B cell (primary cell): ENCODE measurements at regions of chr12 and their contacts with region 1.

Region 1: GRCh38 chr12:92196368-92196767 is 50.7 kb upstream of the BTG1 start:
- DNase-seq: no peak
- ATAC-seq: no peak
- H3K4me3 ChIP-seq: no peak overlapping the region
- H3K4me3 Mint-ChIP-seq: no peak overlapping the region
- H3K27ac ChIP-seq: no peak overlapping the region
- H3K27ac Mint-ChIP-seq: no peak overlapping the region
- H3K4me1 ChIP-seq: peaks cover 10 to 16% of the 10 kb centered on the region in 2 donors
- H3K4me1 Mint-ChIP-seq: peaks cover 24% of the 10 kb centered on the region
- H3K27me3 ChIP-seq: no peaks in the 10 kb centered on the region
- H3K27me3 Mint-ChIP-seq: no peaks in the 10 kb centered on the region
- CTCF ChIP-seq: no peak

Region 2: GRCh38 chr12:92178340-92178739 is 18.0 kb before region 1 on chr12:
- CTCF ChIA-PET with region 1: no interaction called
- POLR2A ChIA-PET with region 1: no interaction called
- intact Hi-C with region 1: no loop called
- DNase-seq: no peak
- ATAC-seq: no peak
- H3K4me3 ChIP-seq: no peak overlapping the region
- H3K4me3 Mint-ChIP-seq: no peak overlapping the region
- H3K27ac ChIP-seq: no peak overlapping the region
- H3K27ac Mint-ChIP-seq: peak overlapping the region; percentile 47
- H3K4me1 ChIP-seq: peaks cover 3 to 9% of the 10 kb centered on the region in 2 donors
- H3K4me1 Mint-ChIP-seq: peaks cover 28% of the 10 kb centered on the region
- H3K27me3 ChIP-seq: no peaks in the 10 kb centered on the region
- H3K27me3 Mint-ChIP-seq: no peaks in the 10 kb centered on the region
- CTCF ChIP-seq: no peak

Region 3: DNA sequence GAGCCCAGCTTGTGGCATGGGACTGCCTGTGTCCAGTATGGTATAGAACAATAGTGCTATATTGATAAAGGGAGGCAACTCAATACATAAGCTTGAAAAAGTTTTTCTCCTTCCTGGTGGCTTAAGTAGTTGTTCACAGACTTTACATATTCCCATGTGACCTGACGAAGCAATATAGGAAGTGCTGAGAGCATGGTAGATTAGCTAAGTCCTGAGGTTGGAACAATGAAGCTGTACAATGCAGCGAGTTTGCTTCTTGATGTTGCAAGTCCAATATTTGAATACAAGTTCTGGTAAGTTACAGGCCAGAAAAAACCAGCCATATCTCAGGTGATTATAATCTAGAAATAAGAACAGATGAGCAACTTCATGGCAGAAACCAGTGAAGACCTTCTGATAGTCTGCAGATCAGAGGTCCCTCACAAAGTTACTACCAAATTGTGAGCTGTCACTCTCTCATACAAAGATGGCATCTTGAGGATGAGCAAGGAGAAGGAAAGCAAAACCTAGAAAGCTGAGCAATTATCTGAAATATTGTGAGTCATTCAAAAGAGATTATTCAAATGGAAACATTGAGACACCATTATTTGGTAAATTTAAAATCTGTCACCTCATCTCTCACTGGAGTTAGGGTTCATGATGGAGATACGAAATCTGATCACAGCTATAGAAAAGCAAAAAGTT is 22.2 kb after region 1 on chr12:
- CTCF ChIA-PET with region 1: interaction called, 4 read pairs
- POLR2A ChIA-PET with region 1: interaction called, 13 read pairs
- intact Hi-C with region 1: no loop called
- DNase-seq: peak; percentile 54
- ATAC-seq: peak; percentile 73
- H3K4me3 ChIP-seq: no peak overlapping the region
- H3K4me3 Mint-ChIP-seq: peak overlapping the region; percentile 3
- H3K27ac ChIP-seq: no peak overlapping the region
- H3K27ac Mint-ChIP-seq: no peak overlapping the region
- H3K4me1 ChIP-seq: peaks cover 12 to 15% of the 10 kb centered on the region in 2 donors
- H3K4me1 Mint-ChIP-seq: peaks cover 20% of the 10 kb centered on the region
- H3K27me3 ChIP-seq: no peaks in the 10 kb centered on the region
- H3K27me3 Mint-ChIP-seq: no peaks in the 10 kb centered on the region
- CTCF ChIP-seq: no peak